Activated B cell treated with CpG ODN at 0.5 μM for 24 hours (primary cell): ENCODE measurements at regions of chr12 and their contacts with region 1.

Region 1: GRCh38 chr12:123085730-123086487 is 65.0 kb downstream of the PITPNM2 start:
- DNase-seq: no peak
- ATAC-seq: peak; percentile 32
- H3K4me3 Mint-ChIP-seq: no peak overlapping the region
- H3K27ac Mint-ChIP-seq: no peak overlapping the region
- H3K4me1 Mint-ChIP-seq: peaks cover 73% of the 10 kb centered on the region
- H3K27me3 Mint-ChIP-seq: no peaks in the 10 kb centered on the region
- CTCF ChIP-seq: no peak

Region 2: GRCh38 chr12:123043536-123044001 is 42.3 kb before region 1 on chr12:
- CTCF ChIA-PET with region 1: interaction called, 3 read pairs
- POLR2A ChIA-PET with region 1: interaction called, 3 read pairs
- intact Hi-C with region 1: loop called (anchors 5 kb)
- DNase-seq: peak; percentile 51
- ATAC-seq: peak; percentile 97
- H3K4me3 Mint-ChIP-seq: no peak overlapping the region
- H3K27ac Mint-ChIP-seq: no peak overlapping the region
- H3K4me1 Mint-ChIP-seq: peaks cover 16% of the 10 kb centered on the region
- H3K27me3 Mint-ChIP-seq: no peaks in the 10 kb centered on the region
- CTCF ChIP-seq: no peak

Region 3: GRCh38 chr12:123075646-123076171 is 10.2 kb before region 1 on chr12:
- CTCF ChIA-PET with region 1: interaction called, 3 read pairs
- POLR2A ChIA-PET with region 1: interaction called, 6 read pairs
- intact Hi-C with region 1: loop called (anchors 1 kb)
- DNase-seq: no peak
- ATAC-seq: peak; percentile 88
- H3K4me3 Mint-ChIP-seq: peak overlapping the region; percentile 36
- H3K27ac Mint-ChIP-seq: peak overlapping the region; percentile 76
- H3K4me1 Mint-ChIP-seq: peaks cover 32% of the 10 kb centered on the region
- H3K27me3 Mint-ChIP-seq: no peaks in the 10 kb centered on the region
- CTCF ChIP-seq: no peak

Region 4: DNA sequence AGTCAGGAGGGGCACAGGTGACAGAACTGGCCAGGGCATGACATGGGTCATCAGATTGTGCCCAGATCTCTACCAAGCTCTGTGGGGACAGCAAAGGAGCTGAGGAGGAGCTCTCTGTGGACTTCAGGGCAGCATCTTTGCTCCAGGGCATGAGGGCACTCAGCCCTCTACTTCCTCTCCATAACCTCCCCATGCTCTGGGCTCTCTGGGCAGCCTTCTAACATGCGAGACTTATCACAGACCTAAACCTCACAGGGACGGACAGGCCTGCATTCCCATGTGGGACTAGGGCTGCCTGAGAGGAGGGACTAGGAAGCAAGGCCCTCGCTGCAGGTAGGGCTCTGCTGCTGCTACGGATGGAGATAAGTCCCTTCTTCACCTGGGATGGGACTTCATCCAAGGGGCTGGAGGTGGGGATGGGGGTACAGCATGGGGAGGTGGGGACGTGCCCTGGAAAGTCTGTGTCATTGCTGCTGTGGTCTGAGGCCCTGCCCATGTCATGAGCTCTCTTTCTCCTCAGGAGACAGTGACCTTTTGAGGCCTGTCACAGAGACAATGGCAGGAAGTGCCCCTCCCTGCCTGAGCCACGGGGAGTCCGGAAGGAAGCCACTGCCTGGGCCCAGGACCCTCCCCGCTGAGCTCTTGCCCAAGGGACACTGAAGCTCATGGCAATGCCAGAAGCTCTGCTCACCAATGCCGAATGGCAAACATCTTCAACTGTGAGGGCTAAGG is 20.9 kb after region 1 on chr12:
- CTCF ChIA-PET with region 1: interaction called, 4 read pairs
- POLR2A ChIA-PET with region 1: interaction called, 9 read pairs
- intact Hi-C with region 1: loop called (anchors 2 kb)
- DNase-seq: peak; percentile 32
- ATAC-seq: peak; percentile 94
- H3K4me3 Mint-ChIP-seq: peak overlapping the region; percentile 61
- H3K27ac Mint-ChIP-seq: peak overlapping the region; percentile 89
- H3K4me1 Mint-ChIP-seq: peaks cover 36% of the 10 kb centered on the region
- H3K27me3 Mint-ChIP-seq: no peaks in the 10 kb centered on the region
- CTCF ChIP-seq: no peak

Region 5: GRCh38 chr12:123115409-123116121 is 29.7 kb after region 1 on chr12:
- CTCF ChIA-PET with region 1: interaction called, 3 read pairs
- POLR2A ChIA-PET with region 1: interaction called, 10 read pairs
- intact Hi-C with region 1: loop called (anchors 2 kb)
- DNase-seq: peak; percentile 32
- ATAC-seq: peak; percentile 70
- H3K4me3 Mint-ChIP-seq: peak overlapping the region; percentile 29
- H3K27ac Mint-ChIP-seq: peak overlapping the region; percentile 75
- H3K4me1 Mint-ChIP-seq: peaks cover 81% of the 10 kb centered on the region
- H3K27me3 Mint-ChIP-seq: no peaks in the 10 kb centered on the region
- CTCF ChIP-seq: no peak

Region 6: DNA sequence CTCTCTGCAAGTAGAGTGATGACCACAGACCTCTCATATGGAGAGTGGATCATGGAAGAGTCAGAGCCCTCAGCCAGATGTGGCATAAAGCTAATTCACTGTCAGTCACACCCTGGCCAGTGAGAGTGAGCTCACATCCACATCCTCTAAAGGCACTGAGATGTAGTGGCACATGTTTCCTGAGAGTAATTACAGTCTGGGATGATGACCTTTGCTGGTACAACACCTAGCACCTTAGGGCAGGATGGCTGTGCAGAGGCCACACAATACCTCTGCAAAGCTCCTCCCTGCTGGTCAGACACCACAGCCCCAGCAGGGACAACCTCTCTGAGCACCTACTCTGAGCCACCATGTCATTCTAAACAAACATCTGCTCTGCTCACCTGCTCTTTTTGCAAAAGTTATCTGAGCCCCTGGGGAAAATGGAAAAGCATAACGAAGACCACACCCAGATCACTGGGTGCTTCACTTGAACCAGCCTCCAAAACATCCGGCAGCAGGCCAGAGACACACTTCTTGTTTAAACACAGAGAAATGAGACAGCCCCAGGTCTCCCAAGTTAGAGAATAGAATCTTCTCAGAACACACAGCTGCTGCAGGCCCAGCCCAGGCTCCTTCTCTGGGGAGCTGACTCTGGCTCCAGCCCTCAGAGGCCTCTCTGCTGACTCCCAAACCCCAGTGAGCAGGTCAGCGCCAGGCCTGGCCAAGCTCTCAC is 34.7 kb after region 1 on chr12:
- CTCF ChIA-PET with region 1: no interaction called
- POLR2A ChIA-PET with region 1: interaction called, 10 read pairs
- intact Hi-C with region 1: loop called (anchors 2 kb)
- DNase-seq: no peak
- ATAC-seq: peak; percentile 6
- H3K4me3 Mint-ChIP-seq: peak overlapping the region; percentile 61
- H3K27ac Mint-ChIP-seq: peak overlapping the region; percentile 82
- H3K4me1 Mint-ChIP-seq: peaks cover 64% of the 10 kb centered on the region
- H3K27me3 Mint-ChIP-seq: no peaks in the 10 kb centered on the region
- CTCF ChIP-seq: no peak

Region 7: GRCh38 chr12:123150744-123151456 is 65.0 kb after region 1 on chr12 and contains the start of gene PITPNM2:
- CTCF ChIA-PET with region 1: no interaction called
- POLR2A ChIA-PET with region 1: interaction called, 4 read pairs
- intact Hi-C with region 1: loop called (anchors 2 kb)
- DNase-seq: peak; percentile 68
- ATAC-seq: peak; percentile 87
- H3K4me3 Mint-ChIP-seq: peak within 1 kb of the TSS; percentile 81
- H3K27ac Mint-ChIP-seq: peak within 1 kb of the TSS; percentile 65
- H3K4me1 Mint-ChIP-seq: peaks cover 31% of the 10 kb centered on the region
- H3K27me3 Mint-ChIP-seq: no peaks in the 10 kb centered on the region
- CTCF ChIP-seq: no peak
- total RNA-seq, gene PITPNM2: 12.9 and 13.7 TPM in 2 replicates